ENCODE measurements at regions of chr11 and their contacts with region 1.

Region 1: GRCh38 chr11:124837491-124837856 is 27.8 kb upstream of the ROBO3 start:
- DNase-seq: peak; percentile 56 to 67 (median 64)
- ATAC-seq: peak; percentile 84
- H3K4me3 ChIP-seq: no peak overlapping the region
- H3K27ac ChIP-seq: no peak overlapping the region
- H3K4me1 ChIP-seq: peaks cover 0 to 10% of the 10 kb centered on the region in 2 experiments; a peak in 2 of 5 replicates
- H3K27me3 ChIP-seq: peaks cover 44 to 51% of the 10 kb centered on the region in 2 experiments
- CTCF ChIP-seq: peak; percentile 56 to 78 (median 76); a peak in 5 of 6 replicates
- EP300 ChIP-seq: no peak
- POLR2A ChIP-seq: no peak
- RAD21 ChIP-seq: peak; percentile 59 to 85

Region 2: DNA sequence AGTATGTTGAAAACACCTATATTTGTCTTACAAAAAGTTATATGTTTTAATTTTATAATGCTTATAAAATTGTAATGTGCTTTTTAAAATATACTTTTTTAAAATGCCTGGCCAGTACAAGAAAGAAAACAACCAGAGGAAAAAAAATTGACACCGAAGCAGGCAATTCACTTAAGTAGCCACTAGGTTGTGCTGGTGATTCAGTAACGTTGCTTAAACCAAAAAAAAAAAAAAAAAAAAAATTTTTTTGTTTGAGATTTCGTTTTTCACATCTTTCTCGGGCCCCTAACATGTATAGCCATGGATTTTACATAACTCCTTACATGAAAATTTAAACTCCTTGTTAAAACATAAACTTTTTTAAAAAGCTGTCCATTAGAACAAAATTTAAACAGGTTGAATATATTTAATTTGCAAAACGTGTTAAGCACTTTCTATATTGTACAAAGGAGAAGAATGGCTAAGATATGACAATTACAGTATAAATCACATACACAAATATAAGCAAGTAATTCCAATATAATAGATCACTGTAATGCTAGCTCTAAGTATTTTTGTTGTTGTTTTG is 422.0 kb before region 1 on chr11:
- CTCF ChIA-PET with region 1: interaction called, 18 read pairs
- POLR2A ChIA-PET with region 1: no interaction called
- in situ Hi-C with region 1: loop called (anchors 25 kb)
- intact Hi-C with region 1: loop called (anchors 2 kb)
- DNase-seq: peak; percentile 29 to 49 (median 41)
- ATAC-seq: no peak
- H3K4me3 ChIP-seq: no peak overlapping the region
- H3K27ac ChIP-seq: no peak overlapping the region
- H3K4me1 ChIP-seq: no peaks in the 10 kb centered on the region
- H3K27me3 ChIP-seq: no peaks in the 10 kb centered on the region
- CTCF ChIP-seq: peak; percentile 48 to 80 (median 53); a peak in 5 of 6 replicates
- EP300 ChIP-seq: no peak
- POLR2A ChIP-seq: no peak
- RAD21 ChIP-seq: peak; percentile 60 to 83

Region 3: GRCh38 chr11:124673333-124674167 is 163.9 kb before region 1 on chr11 and contains the starts of genes SIAE and SPA17:
- CTCF ChIA-PET with region 1: interaction called, 28 read pairs
- POLR2A ChIA-PET with region 1: interaction called, 4 read pairs
- in situ Hi-C with region 1: loop called (anchors 5 kb)
- intact Hi-C with region 1: loop called (anchors 1 kb)
- DNase-seq: peak; percentile 95 to 98 (median 97)
- ATAC-seq: peak; percentile 99
- H3K4me3 ChIP-seq: peak within 1 kb of the TSS; percentile 83
- H3K27ac ChIP-seq: peak within 1 kb of the TSS; percentile 76
- H3K4me1 ChIP-seq: peaks cover 4 to 14% of the 10 kb centered on the region in 2 experiments
- H3K27me3 ChIP-seq: no peaks in the 10 kb centered on the region
- CTCF ChIP-seq: no peak
- EP300 ChIP-seq: peak; percentile 41; the same call in 1 of the 2 replicates
- POLR2A ChIP-seq: peak; percentile 86
- RAD21 ChIP-seq: no peak
- polyA plus RNA-seq, gene SIAE: 0.89 to 1.2 TPM
- polyA plus RNA-seq, gene SPA17: 9.0 to 9.9 TPM

Region 4: GRCh38 chr11:124799348-124800225 is 37.9 kb before region 1 on chr11:
- CTCF ChIA-PET with region 1: no interaction called
- POLR2A ChIA-PET with region 1: interaction called, 4 read pairs
- in situ Hi-C with region 1: no loop called
- intact Hi-C with region 1: loop called (anchors 2 kb)
- DNase-seq: peak; percentile 39 to 61 (median 54)
- ATAC-seq: peak; percentile 76
- H3K4me3 ChIP-seq: peak overlapping the region; percentile 93
- H3K27ac ChIP-seq: peak overlapping the region; percentile 64; the same call in 2 of the 3 replicates
- H3K4me1 ChIP-seq: peaks cover 12 to 25% of the 10 kb centered on the region in 2 experiments; a peak in 4 of 5 replicates
- H3K27me3 ChIP-seq: peaks cover 2 to 7% of the 10 kb centered on the region in 2 experiments; a peak in 3 of 5 replicates
- CTCF ChIP-seq: no peak
- EP300 ChIP-seq: no peak
- POLR2A ChIP-seq: no peak
- RAD21 ChIP-seq: no peak